CD4-positive, alpha-beta memory T cell (primary cell): ENCODE measurements at regions of chr10 and their contacts with region 1.

Region 1: GRCh38 chr10:118568327-118568848 is 27.1 kb downstream of the PRLHR start:
- DNase-seq: peak; percentile 43 to 69 (median 65)
- H3K4me3 ChIP-seq: no peak overlapping the region
- H3K4me3 Mint-ChIP-seq: peak overlapping the region in 2 of 8 donors; percentile 38 to 54
- H3K27ac ChIP-seq: no peak overlapping the region
- H3K27ac Mint-ChIP-seq: no peak overlapping the region
- H3K4me1 ChIP-seq: no peaks in the 10 kb centered on the region
- H3K4me1 Mint-ChIP-seq: peaks cover 0 to 7% (median 1%) of the 10 kb centered on the region in 4 donors
- H3K27me3 ChIP-seq: no peaks in the 10 kb centered on the region
- H3K27me3 Mint-ChIP-seq: peaks cover 1% of the 10 kb centered on the region in 2 donors

Region 2: DNA sequence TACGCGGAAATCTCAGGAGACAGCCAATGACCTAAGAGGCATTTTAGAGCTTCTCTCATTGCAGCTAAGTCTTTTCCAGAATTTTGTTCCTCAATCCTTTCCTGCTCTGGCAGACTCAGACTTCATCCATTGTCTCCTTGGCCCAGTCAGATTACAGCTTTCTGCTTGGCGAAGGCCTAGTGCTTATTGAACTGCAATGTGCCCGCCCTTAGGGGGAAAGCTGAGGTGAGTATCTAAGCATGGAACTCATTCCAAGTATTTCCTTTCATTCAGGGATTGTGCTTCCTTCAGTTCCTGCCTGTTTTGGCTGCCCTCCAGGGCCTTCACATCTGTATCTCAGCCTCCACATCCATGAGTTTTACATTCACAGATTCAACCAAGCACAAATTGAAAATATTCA is 10.4 kb before region 1 on chr10:
- CTCF ChIA-PET with region 1: interaction called, 13 read pairs
- POLR2A ChIA-PET with region 1: no interaction called
- intact Hi-C with region 1: no loop called
- DNase-seq: no peak
- H3K4me3 ChIP-seq: no peak overlapping the region
- H3K4me3 Mint-ChIP-seq: no peak overlapping the region
- H3K27ac ChIP-seq: no peak overlapping the region
- H3K27ac Mint-ChIP-seq: no peak overlapping the region
- H3K4me1 ChIP-seq: no peaks in the 10 kb centered on the region
- H3K4me1 Mint-ChIP-seq: no peaks in the 10 kb centered on the region
- H3K27me3 ChIP-seq: no peaks in the 10 kb centered on the region
- H3K27me3 Mint-ChIP-seq: peaks cover 15 to 31% of the 10 kb centered on the region in 2 donors

Region 3: DNA sequence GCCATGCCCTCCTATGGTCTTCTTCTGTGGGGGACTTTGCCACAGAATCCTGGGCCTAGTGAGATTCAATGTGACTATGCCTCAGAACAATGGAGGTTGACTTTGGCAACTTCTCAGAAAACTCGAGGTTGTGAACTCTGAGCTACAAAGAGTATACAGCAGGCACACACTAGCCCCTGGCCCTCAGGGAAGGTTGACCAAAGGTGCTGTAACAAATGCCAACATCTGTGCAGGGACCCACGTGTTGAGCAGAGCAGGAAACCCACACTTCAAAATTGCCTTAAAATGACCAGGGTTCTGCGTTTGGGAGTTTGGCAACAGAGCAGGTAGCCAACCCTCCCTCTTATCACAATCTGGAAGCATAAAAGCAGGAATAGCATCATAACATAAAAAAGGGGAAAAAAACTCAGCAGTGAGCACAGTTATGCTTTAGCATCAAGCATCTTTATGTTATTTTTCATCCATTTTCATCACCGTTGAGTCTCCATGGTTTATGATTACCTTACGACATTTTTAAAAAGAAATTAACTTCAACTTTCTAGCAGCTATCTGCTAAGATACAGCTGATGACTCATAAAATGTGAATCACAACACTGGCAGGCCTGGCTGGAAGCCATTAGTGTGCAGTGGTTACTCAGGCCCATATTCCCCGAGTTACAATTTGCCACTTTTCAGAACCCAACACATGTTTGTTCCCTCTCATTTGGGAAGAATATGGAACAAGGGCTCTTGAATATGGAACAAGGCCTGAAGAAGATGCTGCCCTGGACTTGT is 16.0 kb after region 1 on chr10:
- CTCF ChIA-PET with region 1: interaction called, 24 read pairs
- POLR2A ChIA-PET with region 1: no interaction called
- intact Hi-C with region 1: no loop called
- DNase-seq: no peak
- H3K4me3 ChIP-seq: no peak overlapping the region
- H3K4me3 Mint-ChIP-seq: no peak overlapping the region
- H3K27ac ChIP-seq: no peak overlapping the region
- H3K27ac Mint-ChIP-seq: no peak overlapping the region
- H3K4me1 ChIP-seq: no peaks in the 10 kb centered on the region
- H3K4me1 Mint-ChIP-seq: no peaks in the 10 kb centered on the region
- H3K27me3 ChIP-seq: no peaks in the 10 kb centered on the region
- H3K27me3 Mint-ChIP-seq: peaks cover 1 to 2% of the 10 kb centered on the region in 2 donors

Region 4: GRCh38 chr10:118708571-118708970 is 140.2 kb after region 1 on chr10:
- CTCF ChIA-PET with region 1: interaction called, 11 read pairs
- POLR2A ChIA-PET with region 1: no interaction called
- intact Hi-C with region 1: no loop called
- DNase-seq: no peak
- H3K4me3 ChIP-seq: no peak overlapping the region
- H3K4me3 Mint-ChIP-seq: no peak overlapping the region
- H3K27ac ChIP-seq: no peak overlapping the region
- H3K27ac Mint-ChIP-seq: no peak overlapping the region
- H3K4me1 ChIP-seq: no peaks in the 10 kb centered on the region
- H3K4me1 Mint-ChIP-seq: peaks cover 3 to 11% (median 7%) of the 10 kb centered on the region in 4 donors
- H3K27me3 ChIP-seq: no peaks in the 10 kb centered on the region
- H3K27me3 Mint-ChIP-seq: no peaks in the 10 kb centered on the region

Region 5: GRCh38 chr10:118720685-118721538 is 152.5 kb after region 1 on chr10:
- CTCF ChIA-PET with region 1: interaction called, 171 read pairs
- POLR2A ChIA-PET with region 1: no interaction called
- intact Hi-C with region 1: loop called (anchors 1 kb)
- DNase-seq: peak; percentile 49 to 63 (median 60)
- H3K4me3 ChIP-seq: no peak overlapping the region
- H3K4me3 Mint-ChIP-seq: no peak overlapping the region
- H3K27ac ChIP-seq: no peak overlapping the region
- H3K27ac Mint-ChIP-seq: no peak overlapping the region
- H3K4me1 ChIP-seq: peaks cover 5% of the 10 kb centered on the region
- H3K4me1 Mint-ChIP-seq: peaks cover 0 to 11% (median 4%) of the 10 kb centered on the region in 4 donors
- H3K27me3 ChIP-seq: no peaks in the 10 kb centered on the region
- H3K27me3 Mint-ChIP-seq: no peaks in the 10 kb centered on the region

Region 6: DNA sequence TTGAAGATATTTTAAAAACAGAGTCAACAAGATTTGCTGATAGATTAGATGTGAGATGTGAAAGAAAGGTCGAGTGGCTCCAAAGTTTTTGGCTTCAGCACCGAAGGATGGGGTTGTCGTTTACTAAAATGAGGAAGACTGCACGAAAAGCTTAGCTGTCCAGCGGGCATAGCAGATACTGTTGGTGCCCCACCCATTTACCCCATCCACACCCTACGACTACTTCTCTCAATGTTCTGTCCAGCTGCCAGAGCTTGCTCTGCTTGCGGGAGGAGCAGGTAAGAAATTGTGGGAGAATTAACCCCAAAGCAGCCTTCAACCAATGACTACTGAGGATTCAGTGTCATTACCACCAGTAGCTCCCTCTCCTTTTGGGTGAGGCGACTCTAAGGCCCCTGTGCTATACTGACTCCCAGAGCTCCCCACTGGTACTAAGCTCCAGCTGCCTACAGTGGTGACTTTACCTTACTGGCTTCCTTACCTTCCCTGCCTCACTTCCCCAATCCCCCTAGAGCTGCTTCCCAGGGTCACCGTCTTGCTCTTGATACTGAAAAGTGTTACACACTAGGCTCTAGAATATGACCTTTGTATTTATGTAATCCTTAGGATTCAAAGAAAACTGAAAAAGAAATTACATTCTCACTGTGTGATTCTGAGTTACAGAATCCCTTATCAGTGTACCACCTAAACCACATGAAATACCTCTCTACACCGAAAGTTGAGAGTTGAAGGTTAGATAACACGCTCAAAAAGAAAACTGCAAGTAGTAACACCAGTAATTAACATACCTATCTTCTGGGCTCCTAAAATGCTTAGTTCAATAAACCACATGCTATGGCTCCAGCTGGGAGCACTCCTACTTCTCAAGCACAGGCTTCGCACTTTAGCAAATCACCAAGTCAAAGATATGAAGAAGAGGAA is 164.1 kb after region 1 on chr10:
- CTCF ChIA-PET with region 1: interaction called, 27 read pairs
- POLR2A ChIA-PET with region 1: no interaction called
- intact Hi-C with region 1: no loop called
- DNase-seq: peak in 4 of 5 donors; percentile 36 to 49 (median 38)
- H3K4me3 ChIP-seq: no peak overlapping the region
- H3K4me3 Mint-ChIP-seq: peak overlapping the region; percentile 50 to 85 (median 74)
- H3K27ac ChIP-seq: peak overlapping the region; percentile 12
- H3K27ac Mint-ChIP-seq: peak overlapping the region; percentile 75 to 88 (median 80)
- H3K4me1 ChIP-seq: peaks cover 77% of the 10 kb centered on the region
- H3K4me1 Mint-ChIP-seq: peaks cover 63 to 90% (median 74%) of the 10 kb centered on the region in 4 donors
- H3K27me3 ChIP-seq: no peaks in the 10 kb centered on the region
- H3K27me3 Mint-ChIP-seq: no peaks in the 10 kb centered on the region

Region 7: GRCh38 chr10:118901380-118901779 is 333.0 kb after region 1 on chr10:
- CTCF ChIA-PET with region 1: no interaction called
- POLR2A ChIA-PET with region 1: no interaction called
- intact Hi-C with region 1: no loop called
- DNase-seq: no peak
- H3K4me3 ChIP-seq: no peak overlapping the region
- H3K4me3 Mint-ChIP-seq: no peak overlapping the region
- H3K27ac ChIP-seq: no peak overlapping the region
- H3K27ac Mint-ChIP-seq: no peak overlapping the region
- H3K4me1 ChIP-seq: no peaks in the 10 kb centered on the region
- H3K4me1 Mint-ChIP-seq: no peaks in the 10 kb centered on the region
- H3K27me3 ChIP-seq: no peaks in the 10 kb centered on the region
- H3K27me3 Mint-ChIP-seq: peaks cover 7 to 13% of the 10 kb centered on the region in 2 donors

Region 8: DNA sequence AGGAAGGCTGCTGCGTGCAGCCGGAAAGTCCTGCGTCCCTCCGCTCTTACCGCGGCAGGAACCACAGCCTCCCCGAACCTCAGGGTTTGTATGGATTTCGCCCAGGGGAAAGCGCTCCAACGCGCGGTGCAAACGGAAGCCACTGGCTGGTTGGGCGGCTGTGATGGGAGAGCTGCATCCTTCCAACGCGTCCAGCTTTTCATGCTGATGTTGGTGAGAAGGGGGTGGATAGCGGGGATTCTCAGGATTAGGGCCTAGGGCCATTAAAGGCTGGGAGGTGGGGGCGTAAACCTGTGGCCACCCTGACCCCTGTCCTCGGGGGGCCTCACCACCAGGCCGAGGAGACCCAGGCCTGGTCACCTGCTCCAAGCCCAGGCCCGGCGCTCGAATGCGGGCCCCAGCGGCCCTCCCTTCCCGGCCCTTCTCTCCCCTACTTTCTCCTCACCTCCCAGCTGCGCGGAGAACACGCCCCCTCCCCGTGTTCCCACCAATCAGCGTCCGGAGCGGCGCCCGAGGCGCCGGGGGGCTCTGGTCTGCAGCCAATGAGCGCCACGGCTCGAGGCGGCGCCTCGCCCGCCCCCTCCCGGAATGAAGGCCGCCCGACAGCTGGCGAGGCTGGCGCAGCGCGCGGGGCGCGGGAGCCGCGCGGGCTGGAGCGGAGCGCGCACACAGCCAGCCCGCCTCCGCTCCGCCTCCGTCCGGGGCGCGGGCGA is 460.7 kb after region 1 on chr10:
- CTCF ChIA-PET with region 1: no interaction called
- POLR2A ChIA-PET with region 1: no interaction called
- intact Hi-C with region 1: loop called (anchors 1 kb)
- DNase-seq: peak; percentile 69 to 84 (median 73)
- H3K4me3 ChIP-seq: peak overlapping the region in 1 of 2 donors; percentile 28
- H3K4me3 Mint-ChIP-seq: peak overlapping the region; percentile 78 to 85 (median 80)
- H3K27ac ChIP-seq: no peak overlapping the region
- H3K27ac Mint-ChIP-seq: peak overlapping the region in 3 of 7 donors; percentile 64 to 73 (median 72)
- H3K4me1 ChIP-seq: peaks cover 7% of the 10 kb centered on the region
- H3K4me1 Mint-ChIP-seq: peaks cover 6 to 30% (median 15%) of the 10 kb centered on the region in 4 donors
- H3K27me3 ChIP-seq: no peaks in the 10 kb centered on the region
- H3K27me3 Mint-ChIP-seq: no peaks in the 10 kb centered on the region